ENCODE measurements at regions of chr17 and their contacts with region 1.

Region 1: DNA sequence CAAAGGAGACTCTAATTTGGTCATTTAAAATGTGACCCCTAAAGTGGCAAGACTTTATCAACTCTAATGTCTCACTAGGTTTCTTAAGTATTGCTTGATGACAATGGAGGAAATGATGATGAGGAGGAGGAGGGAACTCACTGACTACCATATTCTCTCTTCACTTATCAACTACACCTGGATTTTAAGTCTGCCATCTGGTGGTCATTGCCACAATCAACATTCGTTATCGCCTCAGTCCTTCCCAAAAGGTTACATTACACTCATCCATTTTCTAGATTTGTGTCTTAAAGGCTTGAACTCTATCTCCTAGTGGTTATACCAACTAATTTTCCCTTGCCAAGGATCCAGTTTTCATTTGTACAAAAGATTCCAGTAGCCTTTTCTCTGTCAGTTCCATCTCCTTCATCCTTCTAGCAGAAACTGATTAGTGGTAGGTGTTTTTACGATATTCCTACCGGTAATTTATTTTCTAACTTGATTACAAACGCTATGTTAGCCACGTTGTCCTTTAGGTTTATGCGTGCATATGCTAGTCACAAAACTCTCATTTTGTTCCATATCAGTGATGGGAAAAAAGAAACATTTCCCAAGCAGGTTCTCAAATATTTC is 114.6 kb upstream of the NOG start:
- DNase-seq: no peak
- ATAC-seq: peak in 1 of 4 donors; percentile 59
- H3K4me3 ChIP-seq: no peak overlapping the region
- H3K27ac ChIP-seq: no peak overlapping the region
- H3K4me1 ChIP-seq: peaks cover 7% of the 10 kb centered on the region
- H3K27me3 ChIP-seq: no peaks in the 10 kb centered on the region
- CTCF ChIP-seq: peak; percentile 56

Region 2: DNA sequence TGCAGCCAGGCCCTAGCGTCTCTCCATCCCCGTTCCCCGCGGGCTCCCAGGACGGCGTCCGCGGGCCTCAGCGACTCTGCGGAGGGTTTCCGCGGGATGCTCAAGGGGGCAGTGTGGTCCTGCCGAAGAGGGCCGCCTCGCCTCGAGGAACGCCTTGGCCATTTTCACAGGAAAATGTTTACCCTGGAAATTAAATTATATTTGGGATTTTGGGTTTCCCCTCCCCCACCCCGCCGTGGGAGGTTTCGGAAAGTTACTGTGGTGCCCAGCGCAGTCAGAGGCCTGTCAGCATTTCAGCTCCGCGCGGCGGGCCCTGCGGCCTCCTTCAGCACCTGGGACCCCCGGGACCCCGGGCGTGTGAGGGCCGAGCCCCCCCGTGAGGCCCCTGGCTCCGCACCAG is 633.6 kb before region 1 on chr17:
- intact Hi-C with region 1: loop called in 1 of 2 experiments (anchors 5 kb)
- DNase-seq: peak; percentile 64 to 81
- ATAC-seq: peak; percentile 63 to 88 (median 81)
- H3K4me3 ChIP-seq: peak overlapping the region; percentile 48
- H3K27ac ChIP-seq: no peak overlapping the region
- H3K4me1 ChIP-seq: no peaks in the 10 kb centered on the region
- H3K27me3 ChIP-seq: no peaks in the 10 kb centered on the region
- CTCF ChIP-seq: peak; percentile 53

Region 3: GRCh38 chr17:56125830-56126819 is 352.8 kb before region 1 on chr17:
- intact Hi-C with region 1: loop called in 1 of 2 experiments (anchors 10 kb)
- DNase-seq: no peak
- ATAC-seq: peak; percentile 58 to 75 (median 63)
- H3K4me3 ChIP-seq: no peak overlapping the region
- H3K27ac ChIP-seq: no peak overlapping the region
- H3K4me1 ChIP-seq: no peaks in the 10 kb centered on the region
- H3K27me3 ChIP-seq: no peaks in the 10 kb centered on the region
- CTCF ChIP-seq: peak; percentile 60

Measured in psoas muscle (tissue), 8 donors.